MCF 10A (cell line): ENCODE measurements at regions of chr13 and their contacts with region 1.

Region 1: GRCh38 chr13:27270594-27271520 is at the start of gene RASL11A:
- DNase-seq: peak; percentile 81
- H3K4me3 Mint-ChIP-seq: peak within 1 kb of the TSS; percentile 72
- H3K27ac Mint-ChIP-seq: no peak within 1 kb of the TSS
- H3K4me1 Mint-ChIP-seq: peaks cover 9% of the 10 kb centered on the region
- H3K27me3 Mint-ChIP-seq: no peaks in the 10 kb centered on the region
- CTCF ChIP-seq: peak; percentile 94
- total RNA-seq, gene RASL11A: 0.71 and 0.98 TPM in 2 replicates

Region 2: GRCh38 chr13:27226991-27227390 is 43.9 kb before region 1 on chr13:
- CTCF ChIA-PET with region 1: no interaction called
- POLR2A ChIA-PET with region 1: no interaction called
- intact Hi-C with region 1: no loop called
- DNase-seq: no peak
- H3K4me3 Mint-ChIP-seq: no peak overlapping the region
- H3K27ac Mint-ChIP-seq: no peak overlapping the region
- H3K4me1 Mint-ChIP-seq: no peaks in the 10 kb centered on the region
- H3K27me3 Mint-ChIP-seq: peaks cover 8% of the 10 kb centered on the region
- CTCF ChIP-seq: no peak

Region 3: GRCh38 chr13:27251166-27252091 is 19.4 kb before region 1 on chr13 and contains the start of gene RPL21:
- CTCF ChIA-PET with region 1: interaction called, 3 read pairs
- POLR2A ChIA-PET with region 1: interaction called, 11 read pairs
- intact Hi-C with region 1: no loop called
- DNase-seq: peak; percentile 95
- H3K4me3 Mint-ChIP-seq: peak within 1 kb of the TSS; percentile 93
- H3K27ac Mint-ChIP-seq: peak within 1 kb of the TSS; percentile 99
- H3K4me1 Mint-ChIP-seq: peaks cover 14% of the 10 kb centered on the region
- H3K27me3 Mint-ChIP-seq: no peaks in the 10 kb centered on the region
- CTCF ChIP-seq: no peak
- total RNA-seq, gene RPL21: 1,293 and 1,479 TPM in 2 replicates

Region 4: GRCh38 chr13:27283906-27284493 is 13.1 kb after region 1 on chr13:
- CTCF ChIA-PET with region 1: interaction called, 11 read pairs
- POLR2A ChIA-PET with region 1: no interaction called
- intact Hi-C with region 1: no loop called
- DNase-seq: peak; percentile 56
- H3K4me3 Mint-ChIP-seq: no peak overlapping the region
- H3K27ac Mint-ChIP-seq: no peak overlapping the region
- H3K4me1 Mint-ChIP-seq: no peaks in the 10 kb centered on the region
- H3K27me3 Mint-ChIP-seq: no peaks in the 10 kb centered on the region
- CTCF ChIP-seq: no peak

Region 5: DNA sequence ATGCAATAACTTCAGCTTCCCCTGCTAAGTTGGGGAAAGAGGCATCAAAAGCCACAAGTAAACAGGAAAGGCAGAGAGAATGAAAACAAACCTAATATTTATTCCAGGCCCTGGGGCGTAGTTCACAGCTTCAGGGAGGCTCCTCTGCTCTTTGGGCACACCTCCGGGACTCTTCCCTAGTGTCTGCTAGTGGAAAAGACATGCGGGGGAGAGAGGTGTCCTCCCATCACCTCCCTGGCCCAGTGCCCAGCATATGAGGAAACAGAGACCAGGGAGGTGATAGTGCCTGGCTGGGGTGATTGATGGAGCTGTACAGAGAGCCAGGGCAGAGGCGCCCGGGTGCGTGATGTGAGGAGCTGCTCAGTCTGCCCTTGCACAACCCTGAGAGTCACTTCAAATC is 70.8 kb after region 1 on chr13:
- CTCF ChIA-PET with region 1: interaction called, 3 read pairs
- POLR2A ChIA-PET with region 1: interaction called, 4 read pairs
- intact Hi-C with region 1: loop called (anchors 5 kb)
- DNase-seq: peak; percentile 69
- H3K4me3 Mint-ChIP-seq: no peak overlapping the region
- H3K27ac Mint-ChIP-seq: peak overlapping the region; percentile 30
- H3K4me1 Mint-ChIP-seq: peaks cover 16% of the 10 kb centered on the region
- H3K27me3 Mint-ChIP-seq: peaks cover 18% of the 10 kb centered on the region
- CTCF ChIP-seq: no peak